ENCODE measurements at regions of chr1 and their contacts with region 1.

Region 1: DNA sequence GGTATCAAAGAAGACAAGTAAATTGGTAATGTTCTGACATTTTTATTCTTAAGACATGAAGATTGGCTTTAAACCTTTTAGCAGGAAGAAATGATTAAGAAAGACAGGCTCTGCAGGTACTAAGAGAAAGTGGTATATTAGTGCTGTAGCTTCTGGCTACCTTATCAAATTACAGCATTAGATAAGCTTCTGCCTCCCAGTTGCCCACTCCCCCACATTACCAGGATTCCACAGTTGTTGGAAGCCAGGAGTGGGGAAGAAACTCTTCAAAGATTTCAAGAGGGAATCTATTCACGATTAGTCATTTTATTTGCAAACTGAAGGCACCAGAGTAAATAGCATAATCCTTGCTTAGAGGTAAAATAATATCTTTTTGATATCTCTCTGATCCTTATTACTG is 274.9 kb downstream of the LMO4 start:
- DNase-seq: no peak
- H3K4me3 ChIP-seq: no peak overlapping the region
- H3K27ac ChIP-seq: no peak overlapping the region
- H3K4me1 ChIP-seq: peaks cover 8% of the 10 kb centered on the region; the same call in 1 of the 2 replicates
- H3K27me3 ChIP-seq: no peaks in the 10 kb centered on the region
- CTCF ChIP-seq: no peak

Region 2: DNA sequence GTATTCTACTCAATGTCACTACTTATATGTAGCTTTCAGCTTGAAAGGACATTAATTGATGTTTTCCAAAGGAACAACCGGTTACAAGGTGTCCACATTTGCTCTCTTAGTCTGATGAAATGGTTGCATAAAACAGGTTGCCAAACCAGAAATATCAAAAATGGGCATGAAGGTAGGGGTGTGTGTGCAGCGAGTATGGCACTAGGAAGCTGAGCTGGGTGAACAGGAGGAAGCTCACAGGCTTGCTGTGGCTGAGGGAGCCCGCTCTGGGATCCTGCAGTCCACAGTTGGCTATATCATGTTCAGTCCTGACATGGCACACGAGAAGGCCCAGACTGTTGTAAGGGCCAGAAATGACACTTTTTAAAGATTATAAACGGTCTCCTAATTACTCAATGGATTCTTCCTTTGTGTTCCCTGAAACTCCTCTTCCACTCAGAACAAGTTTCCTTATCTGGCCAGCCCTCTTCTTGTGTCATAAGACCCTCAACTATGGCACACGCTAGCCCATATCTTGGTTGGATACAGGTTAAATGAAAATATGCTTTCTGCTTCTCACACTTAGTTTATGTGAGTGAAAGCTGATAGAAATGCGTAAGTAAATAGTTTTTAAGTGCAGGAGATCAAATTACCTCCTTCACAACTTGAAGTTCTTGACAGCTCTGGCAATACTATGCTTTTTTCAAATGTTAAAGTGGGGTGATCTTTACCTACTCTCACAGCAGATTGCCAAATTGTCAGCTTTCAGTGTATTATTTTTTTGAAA is 73.4 kb before region 1 on chr1:
- CTCF ChIA-PET with region 1: no interaction called
- POLR2A ChIA-PET with region 1: interaction called, 15 read pairs
- intact Hi-C with region 1: no loop called
- DNase-seq: no peak
- H3K4me3 ChIP-seq: no peak overlapping the region
- H3K27ac ChIP-seq: no peak overlapping the region
- H3K4me1 ChIP-seq: 0 out of 2 replicates have a peak, but pooled peaks cover 4% of the 10 kb centered on the region
- H3K27me3 ChIP-seq: no peaks in the 10 kb centered on the region
- CTCF ChIP-seq: no peak